ENCODE measurements at regions of chr4 and their contacts with region 1.

Region 1: GRCh38 chr4:19063662-19064061 is 1042.1 kb upstream of the LCORL start:
- DNase-seq: no peak
- ATAC-seq: no peak
- H3K4me3 ChIP-seq: no peak overlapping the region
- H3K27ac ChIP-seq: no peak overlapping the region
- H3K4me1 ChIP-seq: no peaks in the 10 kb centered on the region
- H3K27me3 ChIP-seq: no peaks in the 10 kb centered on the region
- CTCF ChIP-seq: no peak

Region 2: GRCh38 chr4:19002170-19002569 is 61.5 kb before region 1 on chr4:
- intact Hi-C with region 1: loop called (anchors 2 kb)
- DNase-seq: no peak
- ATAC-seq: no peak
- H3K4me3 ChIP-seq: no peak overlapping the region
- H3K27ac ChIP-seq: no peak overlapping the region
- H3K4me1 ChIP-seq: no peaks in the 10 kb centered on the region
- H3K27me3 ChIP-seq: no peaks in the 10 kb centered on the region
- CTCF ChIP-seq: no peak

Measured in upper lobe of right lung (tissue), 1 donor.